ENCODE measurements at regions of chr19 and their contacts with region 1.

Region 1: GRCh38 chr19:49443366-49444099 is 2.2 kb upstream of the SLC17A7 start:
- DNase-seq: peak; percentile 69 to 96 (median 80)
- ATAC-seq: peak; percentile 88
- H3K4me3 ChIP-seq: peak overlapping the region; percentile 84
- H3K27ac ChIP-seq: peak overlapping the region; percentile 78
- H3K4me1 ChIP-seq: peaks cover 32 to 59% of the 10 kb centered on the region in 2 experiments
- H3K27me3 ChIP-seq: peaks cover 7 to 19% of the 10 kb centered on the region in 2 experiments; a peak in 4 of 5 replicates
- CTCF ChIP-seq: peak; percentile 86 to 94 (median 88)
- EP300 ChIP-seq: no peak
- POLR2A ChIP-seq: peak; percentile 58; the same call in 1 of the 2 replicates
- RAD21 ChIP-seq: peak; percentile 84 to 90

Region 2: DNA sequence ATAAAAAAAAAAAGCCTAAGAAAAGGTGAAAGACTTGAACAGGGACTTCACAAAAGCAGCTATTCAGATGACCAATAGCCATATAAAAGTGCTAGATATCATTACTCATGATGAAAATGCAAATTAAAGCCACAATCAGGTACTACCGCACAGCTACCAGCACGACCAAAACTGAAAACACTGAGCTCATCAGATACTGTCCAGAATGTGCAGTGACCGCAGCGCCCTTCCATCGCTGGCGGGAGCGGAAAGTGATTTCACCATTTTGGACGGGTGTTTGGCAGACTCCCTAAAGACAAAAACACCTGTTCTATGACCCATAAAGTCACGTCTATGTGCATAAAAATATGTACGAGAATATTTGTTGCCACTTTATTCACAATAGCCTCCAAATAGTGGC is 179.3 kb before region 1 on chr19:
- CTCF ChIA-PET with region 1: interaction called, 3 read pairs
- POLR2A ChIA-PET with region 1: no interaction called
- in situ Hi-C with region 1: no loop called
- intact Hi-C with region 1: loop called (anchors 10 kb)
- DNase-seq: peak in 2 of 4 experiments; percentile 30 to 32
- ATAC-seq: no peak
- H3K4me3 ChIP-seq: no peak overlapping the region
- H3K27ac ChIP-seq: no peak overlapping the region
- H3K4me1 ChIP-seq: no peaks in the 10 kb centered on the region; a peak in 1 of 5 replicates
- H3K27me3 ChIP-seq: no peaks in the 10 kb centered on the region
- CTCF ChIP-seq: no peak
- EP300 ChIP-seq: no peak
- POLR2A ChIP-seq: no peak
- RAD21 ChIP-seq: no peak

Region 3: GRCh38 chr19:49391581-49392399 is 51.7 kb before region 1 on chr19:
- CTCF ChIA-PET with region 1: interaction called, 59 read pairs
- POLR2A ChIA-PET with region 1: interaction called, 3 read pairs
- in situ Hi-C with region 1: loop called (anchors 5 kb)
- intact Hi-C with region 1: loop called (anchors 1 kb)
- DNase-seq: peak; percentile 87 to 92 (median 89)
- ATAC-seq: peak; percentile 95
- H3K4me3 ChIP-seq: no peak overlapping the region
- H3K27ac ChIP-seq: 0 out of 3 replicates have a peak overlapping the region, but pooled peaks have one; percentile 19
- H3K4me1 ChIP-seq: peaks cover 7 to 45% of the 10 kb centered on the region in 2 experiments; a peak in 4 of 5 replicates
- H3K27me3 ChIP-seq: no peaks in the 10 kb centered on the region
- CTCF ChIP-seq: peak; percentile 95 to 97 (median 97)
- EP300 ChIP-seq: no peak
- POLR2A ChIP-seq: no peak
- RAD21 ChIP-seq: peak; percentile 97 to 99

Region 4: GRCh38 chr19:49422407-49423070 is 21.0 kb before region 1 on chr19:
- CTCF ChIA-PET with region 1: no interaction called
- POLR2A ChIA-PET with region 1: interaction called, 6 read pairs
- in situ Hi-C with region 1: no loop called
- intact Hi-C with region 1: loop called (anchors 2 kb)
- DNase-seq: peak; percentile 87 to 91 (median 90)
- ATAC-seq: peak; percentile 90
- H3K4me3 ChIP-seq: peak overlapping the region; percentile 9; the same call in 1 of the 2 replicates
- H3K27ac ChIP-seq: peak overlapping the region; percentile 50; the same call in 2 of the 3 replicates
- H3K4me1 ChIP-seq: peaks cover 44 to 56% of the 10 kb centered on the region in 2 experiments
- H3K27me3 ChIP-seq: no peaks in the 10 kb centered on the region
- CTCF ChIP-seq: peak; percentile 79 to 90 (median 83)
- EP300 ChIP-seq: no peak
- POLR2A ChIP-seq: peak; percentile 67
- RAD21 ChIP-seq: peak; percentile 26 to 55; a peak in 2 of 4 replicates

Region 5: GRCh38 chr19:49430678-49431329 is 12.7 kb before region 1 on chr19:
- CTCF ChIA-PET with region 1: no interaction called
- POLR2A ChIA-PET with region 1: interaction called, 14 read pairs
- in situ Hi-C with region 1: no loop called
- intact Hi-C with region 1: no loop called
- DNase-seq: peak; percentile 53 to 74 (median 58)
- ATAC-seq: peak; percentile 50
- H3K4me3 ChIP-seq: peak overlapping the region; percentile 50
- H3K27ac ChIP-seq: peak overlapping the region; percentile 75
- H3K4me1 ChIP-seq: peaks cover 35 to 82% of the 10 kb centered on the region in 2 experiments
- H3K27me3 ChIP-seq: no peaks in the 10 kb centered on the region
- CTCF ChIP-seq: peak; percentile 63 to 79 (median 65)
- EP300 ChIP-seq: no peak
- POLR2A ChIP-seq: no peak
- RAD21 ChIP-seq: peak; percentile 36 to 64

Measured in K562 (cell line).